Activated naive CD4-positive, alpha-beta T cell treated with anti-CD3 and anti-CD28 coated beads for 36 hours (primary cell): ENCODE measurements at regions of chr5 and their contacts with region 1.

Region 1: GRCh38 chr5:150066901-150067396 is 19.4 kb downstream of the CSF1R start:
- DNase-seq: no peak
- H3K4me3 Mint-ChIP-seq: no peak overlapping the region
- H3K27ac Mint-ChIP-seq: peak overlapping the region; percentile 44
- H3K4me1 Mint-ChIP-seq: peaks cover 12% of the 10 kb centered on the region
- H3K27me3 Mint-ChIP-seq: no peaks in the 10 kb centered on the region

Region 2: DNA sequence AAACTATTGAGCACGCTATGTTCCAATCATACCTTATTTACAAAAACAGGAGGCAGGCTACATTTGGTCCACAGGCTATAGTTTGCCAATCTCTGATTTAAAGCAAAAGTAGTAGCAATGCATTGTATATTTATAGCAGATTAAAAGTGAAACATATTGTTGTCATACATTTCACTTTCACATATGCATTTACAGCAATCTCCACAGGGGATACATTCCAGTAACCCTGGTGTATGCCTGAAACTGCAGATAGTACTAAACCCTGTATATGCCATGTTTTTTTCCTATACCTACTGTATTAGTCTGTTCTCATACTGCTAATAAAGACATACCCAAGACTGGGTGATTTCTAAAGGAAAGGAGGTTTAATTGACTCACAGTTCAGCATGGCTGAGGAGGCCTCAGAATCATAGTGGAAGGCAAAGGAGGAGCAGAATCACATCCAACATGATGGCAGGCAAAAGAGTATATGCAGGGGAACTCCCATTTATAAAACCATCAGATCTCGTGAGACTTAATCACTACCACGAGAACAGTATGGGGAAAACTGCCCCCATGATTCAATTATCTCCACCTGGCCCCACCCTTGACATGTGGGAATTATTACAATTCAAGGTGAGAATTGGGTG is 25.3 kb after region 1 on chr5:
- CTCF ChIA-PET with region 1: no interaction called
- intact Hi-C with region 1: loop called (anchors 1 kb)
- DNase-seq: no peak
- H3K4me3 Mint-ChIP-seq: no peak overlapping the region
- H3K27ac Mint-ChIP-seq: peak overlapping the region; percentile 79
- H3K4me1 Mint-ChIP-seq: peaks cover 15% of the 10 kb centered on the region
- H3K27me3 Mint-ChIP-seq: peaks cover 16% of the 10 kb centered on the region